ENCODE measurements at regions of chr9 and their contacts with region 1.

Region 1: GRCh38 chr9:116860509-116861120 is 173.5 kb downstream of the TRIM32 start:
- DNase-seq: peak; percentile 48 to 71 (median 57)
- ATAC-seq: peak; percentile 89 to 97 (median 94)
- H3K4me3 ChIP-seq: no peak overlapping the region
- H3K27ac ChIP-seq: no peak overlapping the region
- H3K4me1 ChIP-seq: no peaks in the 10 kb centered on the region
- H3K27me3 ChIP-seq: no peaks in the 10 kb centered on the region
- CTCF ChIP-seq: peak; percentile 74 to 78 (median 76)
- POLR2A ChIP-seq: no peak

Region 2: GRCh38 chr9:116737152-116737546 is 123.5 kb before region 1 on chr9:
- intact Hi-C with region 1: loop called (anchors 5 to 10 kb)
- DNase-seq: peak; percentile 80 to 85 (median 84)
- ATAC-seq: peak; percentile 90 to 96 (median 94)
- H3K4me3 ChIP-seq: no peak overlapping the region
- H3K27ac ChIP-seq: no peak overlapping the region
- H3K4me1 ChIP-seq: no peaks in the 10 kb centered on the region
- H3K27me3 ChIP-seq: no peaks in the 10 kb centered on the region
- CTCF ChIP-seq: peak; percentile 83 to 93 (median 88)
- POLR2A ChIP-seq: no peak

Region 3: GRCh38 chr9:117000834-117001233 is 140.2 kb after region 1 on chr9:
- intact Hi-C with region 1: no loop called
- DNase-seq: no peak
- ATAC-seq: no peak
- H3K4me3 ChIP-seq: no peak overlapping the region
- H3K27ac ChIP-seq: no peak overlapping the region
- H3K4me1 ChIP-seq: no peaks in the 10 kb centered on the region
- H3K27me3 ChIP-seq: no peaks in the 10 kb centered on the region
- CTCF ChIP-seq: no peak
- POLR2A ChIP-seq: no peak

Region 4: GRCh38 chr9:117622347-117622746 is 761.7 kb after region 1 on chr9:
- intact Hi-C with region 1: no loop called
- DNase-seq: no peak
- ATAC-seq: no peak
- H3K4me3 ChIP-seq: no peak overlapping the region
- H3K27ac ChIP-seq: no peak overlapping the region
- H3K4me1 ChIP-seq: no peaks in the 10 kb centered on the region
- H3K27me3 ChIP-seq: no peaks in the 10 kb centered on the region
- CTCF ChIP-seq: peak in 2 of 4 donors; percentile 14 to 18
- POLR2A ChIP-seq: no peak